Calu3 (cell line): ENCODE measurements at regions of chr13 and their contacts with region 1.

Region 1: GRCh38 chr13:27242706-27243105 is 8.7 kb upstream of the RPL21 start:
- DNase-seq: no peak
- H3K4me3 Mint-ChIP-seq: no peak overlapping the region
- H3K27ac Mint-ChIP-seq: no peak overlapping the region
- H3K4me1 Mint-ChIP-seq: no peaks in the 10 kb centered on the region
- H3K27me3 Mint-ChIP-seq: no peaks in the 10 kb centered on the region
- CTCF ChIP-seq: no peak

Region 2: DNA sequence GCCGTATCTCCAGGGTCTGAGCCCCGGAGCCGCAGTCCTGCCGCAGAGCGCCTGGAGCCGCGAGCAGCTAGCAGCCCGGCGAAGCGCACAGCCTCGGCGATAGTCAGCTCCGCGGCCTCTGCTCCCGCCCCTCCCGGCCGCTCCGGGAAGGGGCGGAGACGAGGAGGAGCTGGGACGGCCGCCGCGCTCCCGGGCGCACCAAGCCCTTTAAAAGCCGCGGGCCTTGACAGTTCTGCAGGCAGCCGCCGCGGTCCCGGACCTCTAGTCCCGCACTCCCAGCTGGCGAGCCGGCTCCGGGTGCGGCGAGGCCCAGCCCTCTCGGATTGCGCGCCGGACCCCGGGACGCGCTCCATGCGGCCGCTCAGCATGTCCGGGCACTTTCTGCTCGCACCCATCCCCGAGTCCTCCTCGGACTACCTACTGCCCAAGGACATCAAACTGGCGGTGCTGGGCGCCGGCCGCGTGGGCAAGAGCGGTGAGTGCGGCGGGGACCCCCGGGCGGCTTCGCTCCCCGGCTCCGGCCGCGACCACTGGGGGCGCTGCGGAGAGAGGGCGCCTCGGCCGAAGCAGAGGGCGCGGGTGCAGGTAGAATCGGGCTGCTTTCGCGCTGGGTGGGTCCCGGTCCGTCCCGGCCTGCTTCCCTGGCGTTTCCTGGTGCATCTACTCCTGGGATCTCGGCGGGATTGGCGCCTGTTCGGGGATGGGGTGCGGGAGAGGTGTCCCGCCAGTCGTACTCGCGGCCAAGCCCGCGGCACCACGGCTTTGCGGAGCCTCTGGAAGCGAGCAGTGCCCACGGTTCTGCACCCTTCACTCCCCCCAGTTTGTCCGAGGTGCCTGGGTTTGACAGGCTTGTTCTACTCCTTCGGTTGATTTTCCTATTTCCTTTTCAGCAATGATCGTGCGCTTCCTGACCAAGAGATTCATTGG is 28.2 kb after region 1 on chr13 and contains the start of gene RASL11A:
- CTCF ChIA-PET with region 1: interaction called, 10 read pairs
- intact Hi-C with region 1: no loop called
- DNase-seq: peak; percentile 73
- H3K4me3 Mint-ChIP-seq: peak within 1 kb of the TSS; percentile 77
- H3K27ac Mint-ChIP-seq: peak within 1 kb of the TSS; percentile 56
- H3K4me1 Mint-ChIP-seq: peaks cover 15% of the 10 kb centered on the region
- H3K27me3 Mint-ChIP-seq: peaks cover 24% of the 10 kb centered on the region
- CTCF ChIP-seq: peak; percentile 84
- total RNA-seq, gene RASL11A: 1.3 and 2.2 TPM in 2 replicates